Posterior vena cava (tissue), 2 donors: ENCODE measurements at regions of chr3 and their contacts with region 1.

Region 1: DNA sequence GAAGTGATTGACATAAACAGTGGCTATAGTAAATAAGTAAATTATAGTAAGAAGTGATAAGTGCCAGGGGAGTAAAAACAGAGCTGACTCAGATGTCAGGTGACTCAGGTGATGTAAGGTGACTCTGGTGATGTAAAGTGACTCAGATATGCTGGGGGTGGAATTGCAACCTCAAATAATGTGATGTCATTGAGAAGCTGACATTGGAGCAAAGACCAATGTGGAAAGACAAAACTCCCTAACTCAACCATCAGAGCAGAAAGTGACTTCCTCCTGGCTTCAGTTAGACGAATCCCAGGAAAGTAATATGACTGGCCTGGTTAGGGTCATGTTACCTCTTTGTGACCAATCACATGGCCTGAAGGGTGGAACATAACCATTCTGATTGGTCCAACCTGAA is 144.1 kb upstream of the SNTN start:
- DNase-seq: no peak

Region 2: GRCh38 chr3:63565220-63565619 is 56.9 kb after region 1 on chr3:
- intact Hi-C with region 1: loop called in 1 of 2 experiments (anchors 2 kb)
- DNase-seq: no peak